ENCODE measurements at regions of chr9 and their contacts with region 1.

Region 1: DNA sequence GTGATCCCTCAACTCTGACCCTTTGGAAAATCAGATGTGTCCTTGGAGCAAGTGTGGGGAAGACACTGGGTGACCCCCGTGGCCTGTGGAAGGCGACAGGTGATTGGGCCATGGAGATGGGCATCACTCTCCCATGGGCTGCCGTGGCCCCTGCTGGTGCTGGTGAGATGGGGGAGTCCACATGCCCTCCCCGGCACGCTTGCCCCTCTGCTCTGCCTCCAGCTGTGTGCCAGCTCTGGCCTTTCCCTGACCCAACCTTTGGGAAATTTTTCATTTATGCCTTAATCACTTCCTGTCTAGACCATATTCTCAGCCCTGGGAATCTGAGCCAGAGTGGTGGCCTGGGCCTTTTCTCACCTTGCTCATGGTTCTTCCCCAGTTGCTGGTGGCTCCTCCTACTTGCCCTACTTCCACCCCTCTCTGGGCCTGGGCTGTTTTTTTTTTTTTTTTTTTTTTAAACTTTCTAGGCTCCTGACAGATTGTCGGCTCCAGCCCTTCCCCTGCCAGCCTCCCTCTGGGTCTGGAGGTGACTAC is 56.6 kb downstream of the RGS3 start:
- DNase-seq: peak in 34 of 35 experiments; percentile 23 to 86 (median 52)
- ATAC-seq: peak; percentile 18 to 68 (median 25)
- H3K4me3 ChIP-seq: peak overlapping the region; percentile 44 to 54
- H3K4me3 Mint-ChIP-seq: peak overlapping the region; percentile 83 to 89 (median 84)
- H3K27ac ChIP-seq: peak overlapping the region; percentile 92
- H3K27ac Mint-ChIP-seq: peak overlapping the region; percentile 95 to 99
- H3K4me1 ChIP-seq: peaks cover 77 to 90% of the 10 kb centered on the region in 2 experiments
- H3K4me1 Mint-ChIP-seq: peaks cover 92 to 96% (median 95%) of the 10 kb centered on the region in 3 donors
- H3K27me3 ChIP-seq: no peaks in the 10 kb centered on the region
- H3K27me3 Mint-ChIP-seq: no peaks in the 10 kb centered on the region

Region 2: DNA sequence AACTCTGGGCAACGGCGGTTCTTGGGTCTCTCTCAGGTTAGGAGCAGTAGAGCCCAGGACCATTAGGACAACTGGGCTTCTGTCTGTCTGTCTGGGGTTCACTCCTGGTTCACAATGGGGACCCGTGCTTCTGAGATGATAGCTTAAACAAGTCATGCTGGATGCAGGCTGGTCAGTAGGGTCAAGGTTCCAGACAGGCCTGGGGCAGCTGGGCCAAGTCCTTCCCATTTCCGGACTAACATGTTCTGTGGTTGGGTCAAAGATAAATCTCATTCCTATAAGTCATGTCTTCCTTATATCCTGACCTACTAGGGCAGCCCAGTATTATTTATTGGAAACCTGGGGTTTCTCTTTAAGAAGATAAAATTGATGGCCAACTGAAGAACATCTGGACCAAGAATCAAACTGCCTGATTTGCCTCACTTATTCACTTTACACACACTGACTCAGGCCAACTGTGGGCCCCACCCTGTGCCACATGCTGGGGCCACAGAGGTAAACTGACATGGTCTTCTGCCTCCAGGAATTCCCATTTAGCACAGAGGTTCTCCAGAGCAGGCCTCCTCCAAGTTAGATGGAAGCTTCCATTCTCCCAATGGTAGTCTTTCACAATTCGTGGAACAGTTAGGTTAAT is 151.7 kb before region 1 on chr9:
- CTCF ChIA-PET with region 1: no interaction called
- POLR2A ChIA-PET with region 1: interaction called in 1 of 2 experiments, 13 read pairs
- DNase-seq: no peak
- ATAC-seq: no peak
- H3K4me3 ChIP-seq: no peak overlapping the region
- H3K4me3 Mint-ChIP-seq: no peak overlapping the region
- H3K27ac ChIP-seq: no peak overlapping the region
- H3K27ac Mint-ChIP-seq: no peak overlapping the region
- H3K4me1 ChIP-seq: no peaks in the 10 kb centered on the region
- H3K4me1 Mint-ChIP-seq: peaks cover 0 to 6% (median 0%) of the 10 kb centered on the region in 3 donors
- H3K27me3 ChIP-seq: no peaks in the 10 kb centered on the region
- H3K27me3 Mint-ChIP-seq: peaks cover 0 to 1% of the 10 kb centered on the region in 2 donors

Region 3: GRCh38 chr9:113454914-113455761 is 65.0 kb before region 1 on chr9:
- CTCF ChIA-PET with region 1: no interaction called
- POLR2A ChIA-PET with region 1: interaction called in 1 of 2 experiments, 14 read pairs
- DNase-seq: no peak
- ATAC-seq: no peak
- H3K4me3 ChIP-seq: no peak overlapping the region
- H3K4me3 Mint-ChIP-seq: no peak overlapping the region
- H3K27ac ChIP-seq: no peak overlapping the region
- H3K27ac Mint-ChIP-seq: no peak overlapping the region
- H3K4me1 ChIP-seq: no peaks in the 10 kb centered on the region
- H3K4me1 Mint-ChIP-seq: no peaks in the 10 kb centered on the region
- H3K27me3 ChIP-seq: no peaks in the 10 kb centered on the region
- H3K27me3 Mint-ChIP-seq: no peaks in the 10 kb centered on the region

Region 4: GRCh38 chr9:113468716-113469448 is 51.3 kb before region 1 on chr9:
- CTCF ChIA-PET with region 1: no interaction called
- POLR2A ChIA-PET with region 1: interaction called in 1 of 2 experiments, 12 read pairs
- DNase-seq: no peak
- ATAC-seq: no peak
- H3K4me3 ChIP-seq: no peak overlapping the region
- H3K4me3 Mint-ChIP-seq: no peak overlapping the region
- H3K27ac ChIP-seq: no peak overlapping the region
- H3K27ac Mint-ChIP-seq: no peak overlapping the region
- H3K4me1 ChIP-seq: no peaks in the 10 kb centered on the region
- H3K4me1 Mint-ChIP-seq: peaks cover 0 to 2% (median 0%) of the 10 kb centered on the region in 3 donors
- H3K27me3 ChIP-seq: no peaks in the 10 kb centered on the region
- H3K27me3 Mint-ChIP-seq: no peaks in the 10 kb centered on the region

Region 5: DNA sequence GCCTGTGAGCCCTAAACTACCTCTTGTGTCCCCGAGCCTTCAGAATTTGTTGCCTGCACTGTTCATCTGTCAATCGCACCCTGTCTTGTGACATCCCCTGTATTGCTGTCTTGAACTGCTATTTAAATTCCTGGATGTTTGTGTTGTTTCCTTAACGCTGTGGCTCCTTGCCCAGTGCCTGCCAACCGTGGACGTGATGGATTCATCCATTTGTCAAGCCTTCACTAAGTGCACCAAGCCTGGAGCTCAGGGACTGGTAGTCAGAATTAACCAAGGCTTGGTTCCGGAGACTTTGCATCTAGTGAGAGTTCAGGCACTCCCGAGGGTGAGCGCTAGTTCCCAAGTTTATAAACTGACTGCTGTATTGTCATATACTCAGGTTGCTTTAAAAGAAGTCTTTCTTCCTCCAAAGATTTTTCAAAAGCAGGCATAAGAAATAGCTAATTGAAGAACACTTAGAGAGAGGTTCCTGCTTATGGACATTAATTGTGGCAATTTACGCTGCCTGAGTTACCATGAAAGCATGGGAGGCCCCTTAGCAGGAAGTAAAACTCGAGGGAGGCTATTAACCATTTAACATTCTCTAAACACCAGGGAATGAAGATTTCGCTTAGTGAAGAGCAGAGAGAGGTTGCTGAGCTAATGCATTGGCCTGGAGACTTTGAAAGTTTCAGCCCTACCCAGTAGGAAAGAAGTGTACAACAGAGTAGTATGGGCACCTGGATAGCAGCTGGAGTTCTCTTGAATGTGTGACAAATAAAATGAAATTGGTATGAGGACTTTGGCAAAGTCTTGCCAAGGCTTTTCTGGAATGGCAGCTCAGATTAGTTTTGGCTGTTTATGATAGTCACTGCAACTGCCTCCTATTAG is 27.6 kb before region 1 on chr9:
- CTCF ChIA-PET with region 1: no interaction called
- POLR2A ChIA-PET with region 1: no interaction called
- DNase-seq: no peak
- ATAC-seq: no peak
- H3K4me3 ChIP-seq: no peak overlapping the region
- H3K4me3 Mint-ChIP-seq: no peak overlapping the region
- H3K27ac ChIP-seq: no peak overlapping the region
- H3K27ac Mint-ChIP-seq: peak overlapping the region in 1 of 2 donors; percentile 44
- H3K4me1 ChIP-seq: peaks cover 0 to 2% of the 10 kb centered on the region in 2 experiments
- H3K4me1 Mint-ChIP-seq: peaks cover 0 to 3% (median 2%) of the 10 kb centered on the region in 3 donors
- H3K27me3 ChIP-seq: no peaks in the 10 kb centered on the region
- H3K27me3 Mint-ChIP-seq: no peaks in the 10 kb centered on the region

Measured in T-cell (primary cell).